ENCODE measurements at regions of chr1 and their contacts with region 1.

Region 1: GRCh38 chr1:6794164-6794563 is 8.9 kb downstream of the CAMTA1 start:
- DNase-seq: no peak
- H3K4me3 Mint-ChIP-seq: no peak overlapping the region
- H3K27ac Mint-ChIP-seq: no peak overlapping the region
- H3K4me1 Mint-ChIP-seq: peaks cover 29% of the 10 kb centered on the region
- H3K27me3 Mint-ChIP-seq: no peaks in the 10 kb centered on the region

Region 2: DNA sequence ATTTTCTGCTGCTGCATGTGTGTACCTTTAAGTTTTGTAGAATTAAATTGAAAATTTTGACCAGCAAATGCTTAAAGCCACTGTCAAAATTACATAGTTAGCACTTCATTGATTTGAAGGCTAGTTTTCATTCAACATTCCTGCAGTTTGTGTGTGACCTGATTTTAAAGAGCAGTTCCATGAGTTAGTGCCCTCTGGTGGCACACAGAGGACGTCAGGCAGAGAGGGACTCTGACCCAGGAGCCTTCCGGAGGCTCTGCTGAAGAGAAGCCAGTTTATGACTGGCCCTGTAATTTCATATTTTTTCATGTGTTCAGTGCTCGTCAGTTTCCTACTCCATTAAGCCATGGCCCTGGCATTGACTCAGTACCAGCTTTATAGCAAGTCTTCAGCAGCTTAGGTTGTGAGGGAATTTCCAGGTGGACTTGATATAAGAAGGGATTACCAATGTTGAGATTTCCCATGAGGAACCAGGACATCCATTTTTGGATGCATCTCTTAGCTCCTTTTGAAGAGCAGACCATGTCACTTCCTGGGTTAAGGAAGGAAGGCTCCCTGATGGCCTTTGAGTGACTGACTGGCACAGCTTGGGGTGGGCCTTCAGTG is 95.8 kb after region 1 on chr1:
- CTCF ChIA-PET with region 1: interaction called, 17 read pairs
- POLR2A ChIA-PET with region 1: no interaction called
- intact Hi-C with region 1: loop called (anchors 5 kb)
- DNase-seq: peak; percentile 54
- H3K4me3 Mint-ChIP-seq: no peak overlapping the region
- H3K27ac Mint-ChIP-seq: no peak overlapping the region
- H3K4me1 Mint-ChIP-seq: peaks cover under 1% of the 10 kb centered on the region
- H3K27me3 Mint-ChIP-seq: no peaks in the 10 kb centered on the region

Region 3: DNA sequence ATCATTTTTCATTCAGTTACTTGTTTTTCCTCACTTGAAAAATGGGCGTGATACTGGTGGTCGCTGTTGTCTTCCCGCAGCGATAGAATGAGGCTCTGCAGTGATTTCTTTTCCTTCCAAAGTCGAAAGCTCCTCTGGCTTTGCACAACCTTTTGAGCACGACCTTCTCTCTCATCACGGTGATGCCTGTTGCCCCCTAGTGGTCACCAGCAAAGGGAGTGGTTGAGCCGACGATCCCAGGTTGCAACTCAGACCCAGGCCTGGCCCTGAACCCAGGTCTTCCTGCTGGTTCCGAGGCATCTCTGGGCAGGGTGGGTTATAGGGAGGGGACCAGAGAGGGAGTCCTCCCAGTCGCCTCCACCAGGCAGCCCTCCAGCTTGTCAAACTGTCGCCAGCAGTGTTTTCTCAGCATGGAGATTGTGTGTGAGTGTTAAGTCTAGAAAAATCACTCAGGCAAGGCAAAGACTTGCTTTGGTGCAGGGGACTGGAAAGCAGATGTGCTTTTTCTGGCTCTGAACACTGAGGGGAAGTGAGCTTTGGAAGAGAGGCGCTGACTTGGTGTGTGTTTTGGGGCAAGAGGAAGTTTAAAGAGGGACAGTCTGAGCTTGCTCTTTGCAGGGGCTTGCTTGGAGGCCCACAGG is 276.3 kb after region 1 on chr1:
- CTCF ChIA-PET with region 1: interaction called, 9 read pairs
- POLR2A ChIA-PET with region 1: no interaction called
- intact Hi-C with region 1: loop called (anchors 5 kb)
- DNase-seq: peak; percentile 63
- H3K4me3 Mint-ChIP-seq: no peak overlapping the region
- H3K27ac Mint-ChIP-seq: no peak overlapping the region
- H3K4me1 Mint-ChIP-seq: no peaks in the 10 kb centered on the region
- H3K27me3 Mint-ChIP-seq: peaks cover 16% of the 10 kb centered on the region

Measured in activated CD4-positive, alpha-beta memory T cell treated with anti-CD3 and anti-CD28 coated beads for 36 hours (primary cell).